ENCODE measurements at regions of chr5 and their contacts with region 1.

Region 1: DNA sequence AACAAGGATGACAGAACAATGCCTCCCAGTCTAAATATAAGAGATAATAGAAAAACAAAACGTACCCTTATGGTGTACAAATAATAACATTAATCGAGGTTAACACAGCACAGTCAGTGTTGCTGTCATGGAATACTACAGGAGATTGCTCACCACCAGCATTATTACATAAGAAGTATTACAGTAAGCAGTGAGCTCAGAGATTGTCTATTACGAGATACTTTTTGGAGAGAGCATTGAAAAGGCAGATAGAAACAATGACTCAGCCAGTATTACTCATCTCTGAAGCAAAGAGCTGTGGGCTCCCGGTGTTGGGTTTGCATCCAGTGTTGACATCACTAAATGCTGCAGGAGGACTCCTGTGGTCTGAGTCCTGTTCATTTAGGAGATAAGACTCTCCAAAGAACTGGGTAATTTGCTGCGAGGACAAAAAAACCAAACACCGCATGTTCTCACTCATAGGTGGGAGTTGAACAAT is 191.9 kb upstream of the SEMA6A start:
- DNase-seq: peak; percentile 70
- ATAC-seq: peak; percentile 46
- H3K4me3 ChIP-seq: peak overlapping the region; percentile 43; the same call in 1 of the 2 replicates
- H3K27ac ChIP-seq: no peak overlapping the region
- H3K4me1 ChIP-seq: peaks cover 25% of the 10 kb centered on the region
- H3K27me3 ChIP-seq: no peaks in the 10 kb centered on the region
- CTCF ChIP-seq: no peak
- EP300 ChIP-seq: peak in 1 of 2 experiments; percentile 71; a peak in 1 of 4 replicates
- POLR2A ChIP-seq: no peak
- RAD21 ChIP-seq: no peak

Region 2: GRCh38 chr5:116613445-116613844 is 153.1 kb before region 1 on chr5:
- CTCF ChIA-PET with region 1: interaction called, 3 read pairs
- POLR2A ChIA-PET with region 1: interaction called, 5 read pairs
- RAD21 ChIA-PET with region 1: interaction called, 12 read pairs
- SMC1A ChIA-PET with region 1: interaction called, 45 read pairs
- in situ Hi-C with region 1: no loop called
- intact Hi-C with region 1: no loop called
- DNase-seq: no peak
- ATAC-seq: peak; percentile 87
- H3K4me3 ChIP-seq: no peak overlapping the region
- H3K27ac ChIP-seq: peak overlapping the region; percentile 69; the same call in 1 of the 2 replicates
- H3K4me1 ChIP-seq: peaks cover 17% of the 10 kb centered on the region
- H3K27me3 ChIP-seq: no peaks in the 10 kb centered on the region
- CTCF ChIP-seq: no peak
- EP300 ChIP-seq: no peak
- POLR2A ChIP-seq: no peak
- RAD21 ChIP-seq: no peak

Region 3: DNA sequence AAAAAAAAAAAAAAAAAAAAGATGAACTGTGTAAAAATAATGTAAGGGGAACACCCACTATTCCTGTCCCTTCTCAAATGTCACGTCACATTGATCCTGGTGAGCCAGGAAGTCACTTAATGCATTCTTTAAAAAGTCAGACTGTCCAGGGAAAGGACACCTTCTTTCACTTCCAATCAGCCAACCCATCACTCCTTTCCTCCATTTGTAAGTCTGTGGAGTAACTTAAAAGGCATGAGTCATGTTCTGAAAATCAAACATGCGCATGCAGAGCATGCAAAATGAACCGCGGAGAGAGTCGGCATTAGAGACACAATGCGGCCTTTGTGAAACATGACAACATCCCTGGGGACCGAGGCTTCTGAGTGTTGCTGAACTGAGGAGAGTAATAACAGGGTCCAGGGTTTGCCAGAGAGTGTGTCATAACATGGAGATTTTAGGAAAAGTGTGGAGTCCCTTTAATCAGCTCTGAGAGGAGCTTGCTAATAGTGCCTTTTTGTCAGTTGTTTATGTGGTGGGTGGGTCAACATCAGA is 114.2 kb before region 1 on chr5:
- CTCF ChIA-PET with region 1: interaction called, 4 read pairs
- POLR2A ChIA-PET with region 1: interaction called, 19 read pairs
- RAD21 ChIA-PET with region 1: interaction called, 41 read pairs
- SMC1A ChIA-PET with region 1: interaction called, 103 read pairs
- in situ Hi-C with region 1: no loop called
- intact Hi-C with region 1: loop called (anchors 1 kb)
- DNase-seq: peak; percentile 85
- ATAC-seq: peak; percentile 96
- H3K4me3 ChIP-seq: no peak overlapping the region
- H3K27ac ChIP-seq: no peak overlapping the region; the same call in 1 of the 2 replicates
- H3K4me1 ChIP-seq: peaks cover 12% of the 10 kb centered on the region
- H3K27me3 ChIP-seq: no peaks in the 10 kb centered on the region
- CTCF ChIP-seq: no peak
- EP300 ChIP-seq: peak; percentile 81 to 90; a peak in 3 of 4 replicates
- POLR2A ChIP-seq: no peak
- RAD21 ChIP-seq: no peak

Region 4: GRCh38 chr5:116681334-116682013 is 85.0 kb before region 1 on chr5:
- CTCF ChIA-PET with region 1: interaction called, 4 read pairs
- POLR2A ChIA-PET with region 1: interaction called, 10 read pairs
- RAD21 ChIA-PET with region 1: interaction called, 56 read pairs
- SMC1A ChIA-PET with region 1: interaction called, 36 read pairs
- in situ Hi-C with region 1: no loop called
- intact Hi-C with region 1: no loop called
- DNase-seq: peak; percentile 86
- ATAC-seq: peak; percentile 98
- H3K4me3 ChIP-seq: 0 out of 2 replicates have a peak overlapping the region, but pooled peaks have one; percentile 14
- H3K27ac ChIP-seq: peak overlapping the region; percentile 84
- H3K4me1 ChIP-seq: peaks cover 20% of the 10 kb centered on the region
- H3K27me3 ChIP-seq: no peaks in the 10 kb centered on the region
- CTCF ChIP-seq: no peak
- EP300 ChIP-seq: peak; percentile 48 to 65; a peak in 2 of 4 replicates
- POLR2A ChIP-seq: 0 out of 2 replicates have a peak, but pooled peaks have one; percentile 33
- RAD21 ChIP-seq: no peak

Region 5: GRCh38 chr5:116709082-116709481 is 57.4 kb before region 1 on chr5:
- CTCF ChIA-PET with region 1: interaction called, 5 read pairs
- POLR2A ChIA-PET with region 1: interaction called, 54 read pairs
- RAD21 ChIA-PET with region 1: interaction called, 134 read pairs
- SMC1A ChIA-PET with region 1: interaction called, 132 read pairs
- in situ Hi-C with region 1: no loop called
- intact Hi-C with region 1: loop called (anchors 2 kb)
- DNase-seq: peak; percentile 60
- ATAC-seq: peak; percentile 68
- H3K4me3 ChIP-seq: no peak overlapping the region; the same call in 1 of the 2 replicates
- H3K27ac ChIP-seq: no peak overlapping the region
- H3K4me1 ChIP-seq: peaks cover 25% of the 10 kb centered on the region
- H3K27me3 ChIP-seq: no peaks in the 10 kb centered on the region
- CTCF ChIP-seq: no peak
- EP300 ChIP-seq: no peak
- POLR2A ChIP-seq: no peak
- RAD21 ChIP-seq: no peak

Region 6: GRCh38 chr5:116814626-116815385 is 48.3 kb after region 1 on chr5:
- CTCF ChIA-PET with region 1: no interaction called
- POLR2A ChIA-PET with region 1: no interaction called
- RAD21 ChIA-PET with region 1: no interaction called
- SMC1A ChIA-PET with region 1: no interaction called
- in situ Hi-C with region 1: no loop called
- intact Hi-C with region 1: no loop called
- DNase-seq: no peak
- ATAC-seq: no peak
- H3K4me3 ChIP-seq: no peak overlapping the region
- H3K27ac ChIP-seq: no peak overlapping the region
- H3K4me1 ChIP-seq: no peaks in the 10 kb centered on the region
- H3K27me3 ChIP-seq: no peaks in the 10 kb centered on the region
- CTCF ChIP-seq: no peak
- EP300 ChIP-seq: no peak
- POLR2A ChIP-seq: no peak
- RAD21 ChIP-seq: no peak

Region 7: GRCh38 chr5:116947691-116948528 is 181.4 kb after region 1 on chr5:
- CTCF ChIA-PET with region 1: interaction called, 3 read pairs
- POLR2A ChIA-PET with region 1: no interaction called
- RAD21 ChIA-PET with region 1: interaction called, 15 read pairs
- SMC1A ChIA-PET with region 1: interaction called, 11 read pairs
- in situ Hi-C with region 1: no loop called
- intact Hi-C with region 1: loop called (anchors 2 kb)
- DNase-seq: peak; percentile 87
- ATAC-seq: peak; percentile 100
- H3K4me3 ChIP-seq: no peak overlapping the region
- H3K27ac ChIP-seq: no peak overlapping the region
- H3K4me1 ChIP-seq: peaks cover 3% of the 10 kb centered on the region
- H3K27me3 ChIP-seq: peaks cover 0 to 1% of the 10 kb centered on the region in 2 experiments; a peak in 1 of 4 replicates
- CTCF ChIP-seq: peak; percentile 88 to 94 (median 92)
- EP300 ChIP-seq: 0 out of 4 replicates have a peak, but pooled peaks of 1 of the 2 experiments have one; percentile 35
- POLR2A ChIP-seq: no peak
- RAD21 ChIP-seq: peak; percentile 98

Region 8: GRCh38 chr5:117302949-117303348 is 536.4 kb after region 1 on chr5:
- CTCF ChIA-PET with region 1: no interaction called
- POLR2A ChIA-PET with region 1: no interaction called
- RAD21 ChIA-PET with region 1: no interaction called
- SMC1A ChIA-PET with region 1: no interaction called
- in situ Hi-C with region 1: no loop called
- intact Hi-C with region 1: no loop called
- DNase-seq: no peak
- ATAC-seq: no peak
- H3K4me3 ChIP-seq: no peak overlapping the region
- H3K27ac ChIP-seq: no peak overlapping the region
- H3K4me1 ChIP-seq: no peaks in the 10 kb centered on the region
- H3K27me3 ChIP-seq: no peaks in the 10 kb centered on the region
- CTCF ChIP-seq: no peak
- EP300 ChIP-seq: no peak
- POLR2A ChIP-seq: no peak
- RAD21 ChIP-seq: no peak